Left ventricle myocardium superior (tissue), 1 donor: ENCODE measurements at regions of chr11 and their contacts with region 1.

Region 1: DNA sequence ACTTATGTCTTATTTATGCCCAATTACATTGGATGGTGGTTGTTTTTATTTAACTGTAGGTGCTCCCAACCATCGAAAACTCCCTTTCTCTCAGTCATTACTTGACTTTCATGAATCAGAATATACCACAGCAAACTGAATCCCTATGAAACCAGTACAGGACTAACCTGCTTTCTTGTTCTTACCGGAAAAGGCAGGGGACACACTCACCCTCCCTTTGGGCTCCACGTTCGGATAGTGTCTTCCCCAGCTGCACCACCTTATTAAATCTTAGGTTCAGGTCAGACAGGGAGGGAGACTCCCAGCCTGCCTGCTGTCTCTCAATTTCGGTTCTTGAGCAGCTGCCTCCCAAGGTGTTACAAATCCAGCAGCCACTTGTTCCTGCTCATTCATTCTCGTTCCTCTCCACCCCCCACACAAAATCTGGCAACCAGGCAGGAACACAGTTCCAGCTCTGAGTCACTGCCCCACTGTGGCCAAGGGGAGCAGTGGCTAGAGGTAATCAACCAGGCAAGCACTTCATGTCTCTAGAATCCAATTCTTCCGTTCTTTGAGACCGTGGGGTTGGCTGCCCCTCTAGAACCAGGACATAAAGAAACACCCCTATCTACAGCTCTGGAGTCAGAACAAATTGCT is 133.0 kb downstream of the PLEKHA7 start:
- DNase-seq: peak; percentile 66
- ATAC-seq: peak; percentile 92

Region 2: DNA sequence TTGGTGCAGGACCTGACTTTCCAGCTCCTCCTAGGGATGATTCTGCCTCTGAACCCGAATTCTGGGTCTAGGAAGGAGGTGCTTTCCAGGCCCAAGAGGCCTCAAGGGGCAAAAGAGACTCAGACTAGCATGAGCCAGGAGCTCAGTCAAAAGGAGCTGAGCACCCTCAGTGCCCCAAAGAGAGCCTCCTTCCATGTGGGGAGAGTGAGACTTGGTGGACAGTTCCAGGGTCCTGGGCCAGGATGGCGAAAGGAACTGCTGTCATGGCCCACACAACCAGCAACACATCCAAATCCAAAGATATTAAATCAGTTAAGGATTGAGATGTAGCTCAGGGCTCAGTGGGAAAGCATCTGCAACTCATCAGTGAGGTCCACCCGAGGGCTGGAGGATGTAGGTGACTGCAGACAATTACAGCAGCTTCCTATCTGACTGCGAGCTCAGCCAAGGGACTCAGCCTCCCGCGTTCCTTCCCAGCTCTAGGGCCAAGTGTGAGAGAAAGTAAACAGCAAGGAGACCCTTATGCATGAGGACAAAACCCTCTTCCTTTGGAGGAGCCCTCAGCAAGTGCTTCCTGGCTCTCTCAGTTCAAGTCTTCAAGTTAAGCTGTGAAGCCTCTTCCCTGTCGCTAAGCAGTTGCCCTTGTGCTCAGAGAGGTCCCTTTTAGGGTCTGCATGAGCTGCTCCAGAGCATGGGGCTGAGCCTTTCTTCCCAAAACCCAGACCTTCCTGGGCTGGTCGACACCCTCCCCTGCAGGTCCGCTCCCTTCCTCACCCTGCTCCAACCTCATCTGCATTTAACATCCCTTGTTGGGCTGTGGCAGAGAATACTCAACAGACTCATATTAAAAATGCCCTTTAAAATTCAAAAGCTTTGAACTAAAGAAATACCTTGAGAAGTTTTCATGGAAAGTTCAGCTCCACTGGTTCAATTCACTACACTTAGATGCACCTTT is 106.9 kb before region 1 on chr11:
- intact Hi-C with region 1: no loop called
- DNase-seq: no peak
- ATAC-seq: no peak

Region 3: DNA sequence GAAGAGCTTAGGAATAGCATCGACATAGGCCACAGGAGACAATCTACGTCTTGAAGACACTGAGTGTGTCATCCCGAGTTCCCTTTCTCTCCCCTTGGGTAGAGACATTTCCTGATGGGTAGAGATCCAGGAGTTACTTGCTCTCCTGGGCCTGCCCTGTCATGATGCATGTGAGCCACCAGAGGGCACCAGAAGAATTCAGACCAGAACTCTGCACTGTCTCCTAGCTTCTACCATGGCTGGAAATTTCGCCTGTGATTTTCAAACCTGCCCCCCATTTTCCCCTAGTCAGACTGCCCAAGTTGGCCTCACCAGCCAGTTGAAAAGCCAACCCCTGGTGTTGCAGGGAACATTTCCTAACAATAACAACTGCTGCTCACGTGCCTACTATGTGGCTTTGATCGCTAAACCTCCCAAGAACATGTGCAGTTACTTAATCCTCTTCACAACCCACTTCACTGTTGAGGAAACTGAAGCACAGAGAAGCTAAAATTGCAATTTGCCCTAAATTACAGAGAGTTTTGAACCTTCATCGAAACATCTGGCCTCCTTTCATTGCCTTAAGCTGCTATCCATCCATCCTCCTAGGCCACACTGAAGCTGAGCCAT is 95.6 kb before region 1 on chr11:
- intact Hi-C with region 1: no loop called
- DNase-seq: peak; percentile 58
- ATAC-seq: peak; percentile 80

Region 4: GRCh38 chr11:16820324-16821092 is 60.7 kb before region 1 on chr11:
- intact Hi-C with region 1: loop called (anchors 2 kb)
- DNase-seq: peak; percentile 89
- ATAC-seq: peak; percentile 77

Region 5: DNA sequence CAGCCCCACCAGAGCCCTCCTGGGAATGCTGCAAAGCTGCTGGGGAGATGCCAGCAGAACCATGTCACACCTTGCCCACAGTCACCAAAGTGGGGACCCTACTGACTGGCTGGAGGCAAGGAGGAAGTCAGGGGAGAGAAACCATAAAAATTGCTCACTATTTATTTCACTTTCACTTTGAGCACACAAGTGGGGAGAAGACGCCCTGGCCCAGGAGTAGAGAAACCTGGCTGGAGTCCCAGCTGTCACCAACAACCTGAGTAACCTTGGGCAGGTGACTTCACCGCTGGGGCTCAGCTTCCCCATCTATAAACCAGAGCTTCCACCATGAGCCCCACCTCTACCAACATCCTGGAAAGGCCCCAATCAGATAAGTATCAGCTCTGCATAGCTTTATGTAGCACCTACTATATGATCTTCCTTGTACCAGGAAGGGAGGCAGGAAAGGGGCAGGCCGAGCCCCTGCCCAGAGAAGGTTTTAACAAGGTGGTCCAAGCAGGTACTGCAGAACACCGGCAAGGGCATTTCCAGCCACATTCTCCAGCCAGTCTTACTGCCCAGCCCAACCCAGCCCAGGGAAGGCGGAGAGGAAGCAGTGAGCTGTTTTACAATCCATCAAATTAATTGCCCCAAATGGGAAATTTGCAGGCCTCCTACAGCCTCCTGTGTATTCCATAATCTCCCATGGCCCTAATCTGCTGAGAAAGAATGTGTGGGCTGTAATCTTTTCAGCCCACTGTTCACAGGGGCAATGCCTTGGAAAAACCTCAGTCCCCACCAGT is 105.4 kb after region 1 on chr11:
- intact Hi-C with region 1: no loop called
- DNase-seq: no peak
- ATAC-seq: peak; percentile 33